ENCODE measurements at regions of chr13 and their contacts with region 1.

Region 1: GRCh38 chr13:74464670-74465069 is 330.5 kb upstream of the KLF12 start:
- DNase-seq: no peak
- ATAC-seq: no peak
- H3K4me3 Mint-ChIP-seq: no peak overlapping the region
- H3K27ac Mint-ChIP-seq: no peak overlapping the region
- H3K4me1 Mint-ChIP-seq: no peaks in the 10 kb centered on the region
- H3K27me3 Mint-ChIP-seq: peaks cover 10% of the 10 kb centered on the region
- CTCF ChIP-seq: no peak

Region 2: GRCh38 chr13:74306496-74306895 is 158.2 kb before region 1 on chr13:
- CTCF ChIA-PET with region 1: no interaction called
- POLR2A ChIA-PET with region 1: interaction called, 14 read pairs
- intact Hi-C with region 1: no loop called
- DNase-seq: no peak
- ATAC-seq: no peak
- H3K4me3 Mint-ChIP-seq: no peak overlapping the region
- H3K27ac Mint-ChIP-seq: no peak overlapping the region
- H3K4me1 Mint-ChIP-seq: no peaks in the 10 kb centered on the region
- H3K27me3 Mint-ChIP-seq: peaks cover 9% of the 10 kb centered on the region
- CTCF ChIP-seq: no peak